BJ (cell line): ENCODE measurements at regions of chr12 and their contacts with region 1.

Region 1: GRCh38 chr12:14365294-14366208 is at the start of gene ATF7IP:
- DNase-seq: peak; percentile 88
- H3K4me3 ChIP-seq: peak within 1 kb of the TSS; percentile 91
- H3K27me3 ChIP-seq: no peaks in the 10 kb centered on the region
- CTCF ChIP-seq: peak; percentile 41
- polyA plus RNA-seq, gene ATF7IP: 8.1 and 10.2 TPM in 2 replicates

Region 2: GRCh38 chr12:14256555-14257169 is 108.9 kb before region 1 on chr12:
- CTCF ChIA-PET with region 1: interaction called, 12 read pairs
- POLR2A ChIA-PET with region 1: interaction called, 9 read pairs
- DNase-seq: peak; percentile 22
- H3K4me3 ChIP-seq: no peak overlapping the region
- H3K27me3 ChIP-seq: no peaks in the 10 kb centered on the region
- CTCF ChIP-seq: peak; percentile 83

Region 3: GRCh38 chr12:14332482-14332881 is 33.1 kb before region 1 on chr12:
- CTCF ChIA-PET with region 1: no interaction called
- POLR2A ChIA-PET with region 1: no interaction called
- DNase-seq: no peak
- H3K4me3 ChIP-seq: no peak overlapping the region
- H3K27me3 ChIP-seq: no peaks in the 10 kb centered on the region
- CTCF ChIP-seq: no peak